CD4-positive, alpha-beta memory T cell (primary cell): ENCODE measurements at regions of chr19 and their contacts with region 1.

Region 1: GRCh38 chr19:41263850-41264580 is at the start of gene HNRNPUL1:
- DNase-seq: peak; percentile 100
- H3K4me3 ChIP-seq: peak within 1 kb of the TSS; percentile 78 to 94
- H3K4me3 Mint-ChIP-seq: peak within 1 kb of the TSS; percentile 92 to 98 (median 97)
- H3K27ac ChIP-seq: peak within 1 kb of the TSS; percentile 99
- H3K27ac Mint-ChIP-seq: peak within 1 kb of the TSS; percentile 99 to 100 (median 100)
- H3K4me1 ChIP-seq: peaks cover 42% of the 10 kb centered on the region
- H3K4me1 Mint-ChIP-seq: peaks cover 29 to 60% (median 37%) of the 10 kb centered on the region in 4 donors
- H3K27me3 ChIP-seq: no peaks in the 10 kb centered on the region
- H3K27me3 Mint-ChIP-seq: peaks cover 0 to 4% of the 10 kb centered on the region in 2 donors
- total RNA-seq, gene HNRNPUL1: 300 TPM

Region 2: GRCh38 chr19:40444192-40445028 is 819.6 kb before region 1 on chr19 and contains the start of gene SERTAD3:
- CTCF ChIA-PET with region 1: no interaction called
- POLR2A ChIA-PET with region 1: no interaction called
- intact Hi-C with region 1: loop called (anchors 2 kb)
- DNase-seq: peak; percentile 96 to 99 (median 97)
- H3K4me3 ChIP-seq: peak within 1 kb of the TSS; percentile 96 to 100
- H3K4me3 Mint-ChIP-seq: peak within 1 kb of the TSS; percentile 96 to 100 (median 100)
- H3K27ac ChIP-seq: peak within 1 kb of the TSS; percentile 75
- H3K27ac Mint-ChIP-seq: peak within 1 kb of the TSS; percentile 85 to 100 (median 99)
- H3K4me1 ChIP-seq: peaks cover 11% of the 10 kb centered on the region
- H3K4me1 Mint-ChIP-seq: peaks cover 11 to 22% (median 18%) of the 10 kb centered on the region in 4 donors
- H3K27me3 ChIP-seq: no peaks in the 10 kb centered on the region
- H3K27me3 Mint-ChIP-seq: no peaks in the 10 kb centered on the region
- total RNA-seq, gene SERTAD3: 17.8 to 19.4 TPM

Region 3: GRCh38 chr19:40777937-40778705 is 485.9 kb before region 1 on chr19 and contains the start of gene RAB4B:
- CTCF ChIA-PET with region 1: no interaction called
- POLR2A ChIA-PET with region 1: interaction called, 22 read pairs
- intact Hi-C with region 1: no loop called
- DNase-seq: peak; percentile 100
- H3K4me3 ChIP-seq: peak within 1 kb of the TSS; percentile 67 to 98
- H3K4me3 Mint-ChIP-seq: peak within 1 kb of the TSS; percentile 92 to 98 (median 95)
- H3K27ac ChIP-seq: peak within 1 kb of the TSS; percentile 89
- H3K27ac Mint-ChIP-seq: peak within 1 kb of the TSS; percentile 95 to 99 (median 99)
- H3K4me1 ChIP-seq: peaks cover 29% of the 10 kb centered on the region
- H3K4me1 Mint-ChIP-seq: peaks cover 24 to 45% (median 31%) of the 10 kb centered on the region in 4 donors
- H3K27me3 ChIP-seq: no peaks in the 10 kb centered on the region
- H3K27me3 Mint-ChIP-seq: no peaks in the 10 kb centered on the region
- total RNA-seq, gene RAB4B: 53.5 to 55.0 TPM

Region 4: GRCh38 chr19:41123716-41124294 is 140.2 kb before region 1 on chr19:
- CTCF ChIA-PET with region 1: interaction called, 3 read pairs
- POLR2A ChIA-PET with region 1: interaction called, 6 read pairs
- intact Hi-C with region 1: loop called (anchors 1 kb)
- DNase-seq: no peak
- H3K4me3 ChIP-seq: no peak overlapping the region
- H3K4me3 Mint-ChIP-seq: peak overlapping the region in 1 of 8 donors; percentile 9
- H3K27ac ChIP-seq: no peak overlapping the region
- H3K27ac Mint-ChIP-seq: peak overlapping the region in 6 of 7 donors; percentile 47 to 94 (median 92)
- H3K4me1 ChIP-seq: peaks cover 33% of the 10 kb centered on the region
- H3K4me1 Mint-ChIP-seq: peaks cover 27 to 54% (median 40%) of the 10 kb centered on the region in 4 donors
- H3K27me3 ChIP-seq: no peaks in the 10 kb centered on the region
- H3K27me3 Mint-ChIP-seq: peaks cover 0 to 4% of the 10 kb centered on the region in 2 donors

Region 5: DNA sequence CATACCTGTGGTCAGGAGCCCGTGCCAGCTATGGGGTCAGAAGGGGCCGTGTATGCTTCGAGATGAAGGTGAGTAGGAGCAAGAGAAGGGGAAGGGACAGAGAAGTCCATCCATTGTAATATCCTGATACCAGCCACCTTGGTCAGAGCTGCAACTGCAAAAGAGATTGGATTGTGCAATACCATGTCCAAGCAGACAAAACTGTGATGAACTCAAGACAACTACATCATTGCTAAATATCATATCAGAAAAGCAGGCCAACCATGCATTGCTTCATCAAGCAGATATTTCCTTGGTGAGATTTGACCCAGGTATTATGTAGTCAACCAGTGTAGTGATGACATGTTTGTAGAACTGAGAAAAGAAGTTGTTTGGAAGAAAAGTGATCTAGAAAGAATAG is 12.2 kb after region 1 on chr19:
- CTCF ChIA-PET with region 1: no interaction called
- POLR2A ChIA-PET with region 1: interaction called, 29 read pairs
- intact Hi-C with region 1: no loop called
- DNase-seq: no peak
- H3K4me3 ChIP-seq: no peak overlapping the region
- H3K4me3 Mint-ChIP-seq: no peak overlapping the region
- H3K27ac ChIP-seq: no peak overlapping the region
- H3K27ac Mint-ChIP-seq: peak overlapping the region in 3 of 7 donors; percentile 9 to 60 (median 15)
- H3K4me1 ChIP-seq: no peaks in the 10 kb centered on the region
- H3K4me1 Mint-ChIP-seq: peaks cover 3 to 16% (median 7%) of the 10 kb centered on the region in 4 donors
- H3K27me3 ChIP-seq: no peaks in the 10 kb centered on the region
- H3K27me3 Mint-ChIP-seq: no peaks in the 10 kb centered on the region

Region 6: DNA sequence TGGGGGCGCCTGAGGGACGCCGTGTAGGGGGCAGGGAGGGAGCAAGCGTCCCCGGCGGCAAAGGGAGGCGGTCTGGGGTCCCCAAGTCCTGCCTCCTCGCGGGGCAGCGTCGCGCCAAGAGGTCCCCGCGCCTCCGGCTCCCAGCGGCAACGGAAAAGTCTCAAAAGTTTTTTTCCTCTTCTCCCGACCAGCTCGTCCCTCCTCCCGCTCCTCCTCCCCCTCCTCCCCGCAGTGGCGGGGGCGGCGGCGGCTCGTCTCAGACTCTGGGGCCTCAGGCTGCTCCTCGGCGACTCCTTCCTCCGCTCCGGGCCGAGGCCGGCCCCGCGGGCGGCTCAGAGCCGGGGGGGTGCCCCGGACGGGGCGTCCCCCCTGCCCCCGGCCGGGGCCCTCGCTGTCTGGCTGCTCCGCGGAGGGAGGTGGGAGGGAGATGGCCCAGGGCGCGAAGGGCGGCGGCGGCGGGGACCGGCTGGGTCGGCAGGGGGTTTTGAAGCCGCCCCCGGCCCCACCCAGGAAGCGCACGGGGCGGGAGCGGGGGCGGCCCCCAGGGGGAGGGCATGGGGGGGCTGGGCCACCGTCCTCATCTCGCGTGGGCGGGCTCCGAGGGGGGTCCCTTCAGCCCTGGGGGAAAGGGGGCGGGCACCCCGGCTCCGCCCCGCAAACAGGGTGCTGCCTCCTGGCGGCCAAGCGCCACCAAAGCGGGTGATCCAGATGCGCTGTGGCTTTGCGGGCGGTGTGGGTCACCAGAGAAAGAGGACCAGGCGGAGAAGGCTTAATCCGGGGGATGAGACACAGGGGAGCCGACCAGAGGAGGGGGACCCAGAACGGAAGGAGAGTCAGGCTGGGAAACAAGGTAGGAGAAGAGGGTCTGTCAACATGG is 89.7 kb after region 1 on chr19 and contains the start of gene TGFB1:
- CTCF ChIA-PET with region 1: interaction called, 7 read pairs
- POLR2A ChIA-PET with region 1: interaction called, 217 read pairs
- intact Hi-C with region 1: loop called (anchors 1 kb)
- DNase-seq: peak; percentile 93 to 95 (median 94)
- H3K4me3 ChIP-seq: peak within 1 kb of the TSS; percentile 68 to 88
- H3K4me3 Mint-ChIP-seq: peak within 1 kb of the TSS; percentile 90 to 100 (median 99)
- H3K27ac ChIP-seq: peak within 1 kb of the TSS; percentile 91
- H3K27ac Mint-ChIP-seq: peak within 1 kb of the TSS; percentile 89 to 99 (median 98)
- H3K4me1 ChIP-seq: peaks cover 68% of the 10 kb centered on the region
- H3K4me1 Mint-ChIP-seq: peaks cover 51 to 73% (median 61%) of the 10 kb centered on the region in 4 donors
- H3K27me3 ChIP-seq: no peaks in the 10 kb centered on the region
- H3K27me3 Mint-ChIP-seq: no peaks in the 10 kb centered on the region
- total RNA-seq, gene TGFB1: 136 to 143 TPM

Region 7: GRCh38 chr19:41439441-41440222 is 175.6 kb after region 1 on chr19 and contains the start of gene DMAC2:
- CTCF ChIA-PET with region 1: interaction called, 3 read pairs
- POLR2A ChIA-PET with region 1: interaction called, 20 read pairs
- intact Hi-C with region 1: loop called (anchors 1 kb)
- DNase-seq: peak; percentile 87 to 97 (median 92)
- H3K4me3 ChIP-seq: peak within 1 kb of the TSS; percentile 80 to 93
- H3K4me3 Mint-ChIP-seq: peak within 1 kb of the TSS in 3 of 8 donors; percentile 5 to 80 (median 27)
- H3K27ac ChIP-seq: peak within 1 kb of the TSS; percentile 85
- H3K27ac Mint-ChIP-seq: peak within 1 kb of the TSS in 4 of 7 donors; percentile 22 to 60 (median 25)
- H3K4me1 ChIP-seq: peaks cover 19% of the 10 kb centered on the region
- H3K4me1 Mint-ChIP-seq: peaks cover 6 to 11% (median 10%) of the 10 kb centered on the region in 4 donors
- H3K27me3 ChIP-seq: no peaks in the 10 kb centered on the region
- H3K27me3 Mint-ChIP-seq: peaks cover 6 to 7% of the 10 kb centered on the region in 2 donors
- total RNA-seq, gene DMAC2: 27.7 to 28.9 TPM